H1 (cell line): ENCODE measurements at regions of chr18 and their contacts with region 1.

Region 1: DNA sequence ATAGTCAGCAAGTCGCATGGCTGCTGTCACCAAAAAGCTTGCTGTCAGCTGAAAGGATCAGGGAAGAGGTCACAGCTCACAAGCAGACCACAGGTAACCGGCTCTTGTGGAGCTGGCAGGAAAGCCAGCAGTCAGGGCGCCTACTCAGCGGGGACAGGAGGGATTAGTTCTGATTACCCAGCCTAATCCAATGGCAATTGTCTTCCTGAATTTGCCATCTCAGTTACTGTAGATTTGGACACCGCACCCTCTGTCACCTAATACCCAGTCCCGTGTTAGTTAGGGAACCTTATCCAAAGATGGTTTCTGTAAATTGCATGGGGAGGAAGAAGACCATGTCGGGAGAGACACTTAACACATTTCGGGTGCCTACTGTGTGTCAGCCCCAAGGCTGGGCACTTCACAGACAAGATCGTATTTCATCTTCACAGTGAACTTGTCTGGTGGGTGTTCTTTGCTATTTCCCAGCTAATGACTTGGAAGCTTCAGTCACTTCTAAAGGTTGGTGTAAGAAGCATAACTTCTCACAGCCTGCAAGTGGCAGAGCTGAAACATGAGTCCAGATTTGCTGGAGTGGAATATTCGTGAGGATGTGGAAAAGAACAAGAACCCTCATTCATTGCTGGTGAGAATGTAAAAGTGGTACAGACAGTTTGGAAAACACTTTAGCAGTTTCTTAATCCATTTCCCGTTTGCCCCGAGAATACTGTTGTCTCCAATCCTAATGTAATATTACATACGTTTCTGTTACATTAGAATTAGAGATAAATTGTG is 9.9 kb downstream of the ALPK2 start:
- DNase-seq: no peak
- H3K4me3 ChIP-seq: no peak overlapping the region
- H3K27ac ChIP-seq: no peak overlapping the region
- H3K4me1 ChIP-seq: peaks cover 3 to 11% (median 7%) of the 10 kb centered on the region in 4 experiments; a peak in 6 of 7 replicates
- H3K27me3 ChIP-seq: no peaks in the 10 kb centered on the region
- CTCF ChIP-seq: no peak
- EP300 ChIP-seq: no peak
- POLR2A ChIP-seq: no peak
- RAD21 ChIP-seq: no peak

Region 2: DNA sequence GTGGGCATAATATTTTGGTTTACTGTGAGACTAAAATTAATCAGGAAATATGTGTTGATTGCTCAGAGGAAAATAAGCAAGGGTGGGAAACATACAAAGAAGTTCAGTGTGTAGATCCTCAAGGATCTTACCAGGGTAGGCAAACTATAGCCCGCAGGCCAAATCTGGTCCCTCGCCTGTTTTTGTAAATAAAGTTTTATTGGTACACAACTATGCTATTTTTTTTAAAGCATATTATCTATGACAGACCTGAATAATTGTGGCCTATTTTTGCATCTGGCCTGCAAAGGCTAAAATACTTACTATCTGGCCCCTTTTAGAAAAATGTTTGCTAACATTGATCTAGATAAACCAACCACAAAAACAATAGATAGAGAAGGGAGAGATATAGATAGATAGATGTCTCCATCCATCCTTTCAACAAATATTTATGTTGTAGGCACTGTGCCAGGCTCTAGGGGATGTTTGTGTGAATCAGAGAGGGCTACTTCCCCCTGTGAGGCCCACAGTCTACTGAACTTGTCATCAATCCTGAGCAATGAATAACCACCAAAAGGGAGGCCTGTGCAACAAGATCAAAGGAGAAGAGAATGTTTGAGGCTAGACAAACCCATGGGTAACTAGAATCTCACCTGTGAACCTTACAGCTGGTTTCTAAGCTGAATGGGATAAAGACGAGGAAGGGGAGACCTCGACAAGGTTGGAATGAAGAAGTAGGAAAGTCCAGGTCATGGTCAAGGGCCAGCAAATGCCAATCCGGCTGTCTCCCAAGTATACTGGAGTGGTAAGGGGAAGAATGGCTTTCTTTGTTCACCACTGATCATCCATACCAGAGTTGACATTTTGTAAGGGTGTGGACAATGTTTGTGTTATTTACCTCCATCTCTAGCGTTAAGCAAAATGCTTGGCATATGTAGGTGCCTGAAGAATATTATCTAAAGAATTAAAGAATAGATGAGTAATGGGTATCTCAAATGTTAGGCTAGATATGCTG is 13.7 kb before region 1 on chr18:
- CTCF ChIA-PET with region 1: interaction called, 11 read pairs
- POLR2A ChIA-PET with region 1: interaction called, 3 read pairs
- DNase-seq: no peak
- H3K4me3 ChIP-seq: no peak overlapping the region
- H3K27ac ChIP-seq: no peak overlapping the region
- H3K4me1 ChIP-seq: peaks cover 0 to 10% (median 5%) of the 10 kb centered on the region in 4 experiments; a peak in 4 of 7 replicates
- H3K27me3 ChIP-seq: no peaks in the 10 kb centered on the region
- CTCF ChIP-seq: no peak
- EP300 ChIP-seq: no peak
- POLR2A ChIP-seq: no peak
- RAD21 ChIP-seq: no peak

Region 3: GRCh38 chr18:58682429-58683069 is 63.5 kb after region 1 on chr18:
- CTCF ChIA-PET with region 1: no interaction called
- POLR2A ChIA-PET with region 1: no interaction called
- DNase-seq: no peak
- H3K4me3 ChIP-seq: no peak overlapping the region
- H3K27ac ChIP-seq: no peak overlapping the region
- H3K4me1 ChIP-seq: no peaks in the 10 kb centered on the region; a peak in 1 of 7 replicates
- H3K27me3 ChIP-seq: no peaks in the 10 kb centered on the region
- CTCF ChIP-seq: no peak
- EP300 ChIP-seq: no peak
- POLR2A ChIP-seq: no peak
- RAD21 ChIP-seq: no peak